AG04449 (cell line): ENCODE measurements at regions of chr1 and their contacts with region 1.

Region 1: DNA sequence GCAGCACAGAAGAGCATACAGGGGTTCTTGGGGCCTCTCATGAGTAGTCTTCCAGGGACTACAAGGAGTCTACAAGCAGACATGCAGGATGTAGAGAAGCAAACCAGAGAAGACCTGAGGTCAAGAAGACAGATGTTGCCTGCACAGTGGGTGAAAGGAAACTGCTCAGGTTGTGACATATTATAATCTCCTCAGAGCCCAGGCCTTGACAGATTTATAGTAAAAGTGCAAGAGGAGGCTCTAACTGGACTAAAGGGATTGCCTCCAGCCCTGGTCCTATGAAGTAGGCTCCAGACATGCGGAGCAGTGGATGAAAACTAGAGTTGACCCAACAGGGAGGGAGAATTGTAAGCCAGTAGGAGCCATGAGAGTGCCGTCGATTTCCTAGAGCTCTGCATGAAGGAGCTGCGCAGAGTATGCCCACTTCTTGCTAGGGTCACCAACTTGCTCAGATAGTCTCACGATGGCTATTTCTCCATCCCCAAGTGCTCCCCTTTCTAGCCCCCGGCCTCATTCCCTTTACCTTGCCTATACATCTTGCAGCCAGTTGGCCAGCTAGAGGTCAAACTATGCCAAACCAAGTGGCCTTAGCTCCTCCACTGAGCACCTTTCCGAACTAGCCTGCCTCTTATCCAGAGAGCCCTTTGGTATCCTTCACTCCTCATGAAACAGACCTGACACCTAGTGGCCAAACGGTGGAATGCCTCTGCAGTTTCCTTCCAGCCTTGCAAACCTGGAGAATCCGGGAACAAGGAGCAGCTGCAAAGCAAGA is 36.2 kb upstream of the IPO9 start:
- DNase-seq: peak; percentile 37
- H3K4me3 ChIP-seq: no peak overlapping the region
- CTCF ChIP-seq: peak; percentile 91

Region 2: GRCh38 chr1:201530741-201531531 is 261.8 kb before region 1 on chr1:
- CTCF ChIA-PET with region 1: interaction called, 147 read pairs
- POLR2A ChIA-PET with region 1: no interaction called
- DNase-seq: peak; percentile 40
- H3K4me3 ChIP-seq: no peak overlapping the region
- CTCF ChIP-seq: peak; percentile 87

Region 3: GRCh38 chr1:201696217-201696761 is 96.4 kb before region 1 on chr1:
- CTCF ChIA-PET with region 1: interaction called, 14 read pairs
- POLR2A ChIA-PET with region 1: no interaction called
- DNase-seq: peak; percentile 74
- H3K4me3 ChIP-seq: peak overlapping the region; percentile 9; the same call in 1 of the 2 replicates
- CTCF ChIP-seq: no peak

Region 4: DNA sequence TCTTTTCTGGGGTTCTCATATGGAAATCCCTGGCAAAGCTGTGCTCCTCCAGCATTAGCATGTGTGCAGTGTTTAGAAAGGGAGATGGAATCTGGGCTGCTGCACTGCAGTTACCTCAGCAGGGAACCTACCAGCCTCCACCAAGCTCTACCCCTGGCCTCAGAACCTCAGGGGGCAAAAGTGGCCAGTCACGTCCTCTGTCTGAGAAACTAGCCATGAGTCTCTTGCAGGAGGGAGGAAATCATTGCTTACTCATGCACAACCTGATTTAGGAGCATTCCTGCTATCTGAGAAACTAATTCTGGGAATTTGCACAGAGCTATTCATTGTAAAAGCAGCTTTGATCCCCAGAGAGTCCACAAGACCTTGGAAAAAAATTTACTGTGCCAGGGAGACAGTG is 44.4 kb before region 1 on chr1:
- CTCF ChIA-PET with region 1: interaction called, 22 read pairs
- POLR2A ChIA-PET with region 1: interaction called, 6 read pairs
- DNase-seq: peak; percentile 95
- H3K4me3 ChIP-seq: no peak overlapping the region
- CTCF ChIP-seq: no peak

Region 5: GRCh38 chr1:201766131-201766866 is 26.4 kb before region 1 on chr1:
- CTCF ChIA-PET with region 1: interaction called, 258 read pairs
- POLR2A ChIA-PET with region 1: no interaction called
- DNase-seq: peak; percentile 91
- H3K4me3 ChIP-seq: no peak overlapping the region
- CTCF ChIP-seq: no peak

Region 6: GRCh38 chr1:201813226-201813625 is 20.5 kb after region 1 on chr1:
- CTCF ChIA-PET with region 1: interaction called, 28 read pairs
- POLR2A ChIA-PET with region 1: no interaction called
- DNase-seq: no peak
- H3K4me3 ChIP-seq: no peak overlapping the region
- CTCF ChIP-seq: no peak